ENCODE measurements at regions of chr5 and their contacts with region 1.

Region 1: GRCh38 chr5:139985733-139986132 is 57.4 kb downstream of the NRG2 start:
- DNase-seq: peak; percentile 94
- ATAC-seq: peak; percentile 92
- H3K4me3 ChIP-seq: peak overlapping the region; percentile 27; the same call in 1 of the 2 replicates
- H3K27ac ChIP-seq: peak overlapping the region; percentile 92
- H3K4me1 ChIP-seq: peaks cover 31% of the 10 kb centered on the region
- H3K27me3 ChIP-seq: no peaks in the 10 kb centered on the region
- CTCF ChIP-seq: no peak

Region 2: GRCh38 chr5:140020601-140021177 is 35.0 kb after region 1 on chr5:
- CTCF ChIA-PET with region 1: no interaction called
- POLR2A ChIA-PET with region 1: no interaction called
- intact Hi-C with region 1: loop called (anchors 5 kb)
- DNase-seq: no peak
- ATAC-seq: no peak
- H3K4me3 ChIP-seq: no peak overlapping the region
- H3K27ac ChIP-seq: no peak overlapping the region
- H3K4me1 ChIP-seq: peaks cover 19% of the 10 kb centered on the region
- H3K27me3 ChIP-seq: no peaks in the 10 kb centered on the region
- CTCF ChIP-seq: no peak

Region 3: DNA sequence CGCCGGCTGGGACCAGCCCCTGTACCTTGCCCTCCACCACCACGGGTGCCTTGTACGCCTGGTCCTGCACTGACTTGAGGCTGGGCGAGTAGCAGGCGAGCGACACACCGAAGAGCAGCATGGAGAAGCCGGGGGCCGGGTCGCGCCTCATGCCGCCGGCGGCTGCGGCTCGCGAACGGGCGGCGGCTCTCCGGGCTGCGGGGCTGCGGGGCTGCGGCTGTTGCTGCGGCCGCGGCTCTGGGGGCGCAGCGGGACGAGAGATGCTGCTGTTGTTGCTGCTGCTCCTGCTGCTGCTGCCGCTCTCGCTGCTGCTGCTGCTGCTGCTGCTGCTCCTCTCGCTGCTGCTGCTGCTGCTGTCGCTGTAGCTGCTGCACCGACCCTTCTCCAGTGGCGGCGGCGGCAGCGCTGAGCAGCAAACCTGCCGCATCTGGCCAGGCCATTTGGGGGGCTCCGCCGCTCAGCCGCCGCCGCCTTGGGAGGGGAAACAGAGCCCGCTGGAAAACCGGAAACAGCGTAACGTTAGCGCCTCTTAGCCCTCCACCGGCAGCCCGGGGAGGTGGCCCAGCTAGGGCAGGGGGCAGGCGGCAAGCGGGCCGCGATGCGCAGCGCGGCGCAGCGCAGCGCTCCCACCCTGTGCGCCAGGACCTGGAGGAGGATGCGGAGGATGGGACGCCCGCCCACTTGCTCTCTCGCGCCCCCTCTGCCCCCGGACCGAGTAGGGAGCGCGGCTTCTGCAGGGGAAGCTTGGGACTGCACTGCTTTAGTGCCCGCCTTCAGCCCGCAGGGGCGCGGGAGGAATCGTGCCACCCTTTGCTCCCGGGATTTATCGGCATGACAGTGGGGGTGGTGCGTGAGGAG is 57.1 kb after region 1 on chr5 and contains the start of gene NRG2:
- CTCF ChIA-PET with region 1: interaction called, 6 read pairs
- POLR2A ChIA-PET with region 1: no interaction called
- intact Hi-C with region 1: loop called (anchors 1 kb)
- DNase-seq: peak; percentile 53
- ATAC-seq: peak; percentile 58
- H3K4me3 ChIP-seq: peak within 1 kb of the TSS; percentile 86
- H3K27ac ChIP-seq: 0 out of 2 replicates have a peak within 1 kb of the TSS, but pooled peaks have one; percentile 16
- H3K4me1 ChIP-seq: peaks cover 25% of the 10 kb centered on the region
- H3K27me3 ChIP-seq: no peaks in the 10 kb centered on the region
- CTCF ChIP-seq: peak; percentile 56
- total RNA-seq, gene NRG2: 1.8 and 3.2 TPM in 2 replicates

Measured in PC-3 (cell line).